Prostate gland (tissue), 2 donors: ENCODE measurements at regions of chr1 and their contacts with region 1.

Region 1: GRCh38 chr1:8374812-8375211 is 56.9 kb downstream of the SLC45A1 start:
- DNase-seq: no peak
- H3K4me3 ChIP-seq: no peak overlapping the region
- H3K27ac ChIP-seq: peak overlapping the region; percentile 81 to 83
- H3K4me1 ChIP-seq: peaks cover 55% of the 10 kb centered on the region
- H3K27me3 ChIP-seq: no peaks in the 10 kb centered on the region
- CTCF ChIP-seq: peak in 2 of 4 experiments; percentile 16 to 30
- POLR2A ChIP-seq: no peak

Region 2: DNA sequence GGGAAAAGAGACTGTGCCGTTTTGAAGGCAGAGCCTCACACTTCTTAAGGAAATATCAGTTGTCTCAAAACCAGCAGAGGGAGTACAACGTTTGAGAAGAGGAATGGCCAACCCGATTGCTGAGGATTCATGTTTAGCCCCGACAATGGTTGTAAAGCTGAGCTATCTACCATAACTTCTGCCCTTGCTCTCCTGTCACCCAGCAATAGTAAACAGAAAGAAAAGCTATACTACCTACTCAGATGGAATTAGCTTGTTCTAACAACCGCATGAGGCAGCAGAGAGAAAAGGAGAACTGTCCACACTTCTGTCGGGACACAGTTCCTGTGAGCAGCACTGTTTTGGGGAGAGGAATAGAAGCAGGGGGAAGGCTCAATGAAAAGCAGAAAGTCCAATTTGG is 34.3 kb after region 1 on chr1:
- intact Hi-C with region 1: loop called (anchors 5 kb)
- DNase-seq: no peak
- H3K4me3 ChIP-seq: no peak overlapping the region
- H3K27ac ChIP-seq: peak overlapping the region; percentile 78 to 93
- H3K4me1 ChIP-seq: peaks cover 62% of the 10 kb centered on the region
- H3K27me3 ChIP-seq: no peaks in the 10 kb centered on the region
- CTCF ChIP-seq: peak in 3 of 4 experiments; percentile 38 to 54 (median 51)
- POLR2A ChIP-seq: no peak